Activated B cell treated with CpG ODN at 0.5 μM for 24 hours (primary cell): ENCODE measurements at regions of chr1 and their contacts with region 1.

Region 1: DNA sequence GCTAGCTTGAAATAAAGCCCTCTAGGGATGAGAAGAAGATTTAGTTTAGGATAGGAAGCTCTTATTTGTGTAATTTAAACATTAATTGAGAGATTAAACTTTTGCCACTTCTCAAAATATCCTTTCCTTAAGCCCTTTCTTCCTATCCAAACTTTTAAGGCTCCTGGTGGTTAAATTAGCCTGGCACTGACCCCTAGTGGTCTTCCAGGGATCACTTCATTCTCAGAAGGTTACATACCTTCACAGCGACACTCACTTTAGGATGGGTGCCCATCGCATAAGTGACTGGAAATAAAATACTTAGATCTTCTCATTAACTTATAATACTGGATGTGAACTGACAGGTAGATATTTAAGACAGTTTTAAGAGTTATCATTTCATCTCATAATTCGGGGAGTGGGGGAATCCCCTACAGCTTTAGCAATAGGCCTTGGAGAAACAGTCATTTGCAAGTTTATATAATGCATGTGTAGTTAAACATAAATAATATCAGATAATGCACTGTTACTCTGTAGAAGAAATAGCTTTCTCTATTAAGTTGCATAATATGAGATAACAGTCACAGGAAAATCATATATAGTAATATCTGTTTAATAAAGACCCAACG is 7.4 kb downstream of the LHX9 start:
- DNase-seq: no peak
- ATAC-seq: peak; percentile 76
- H3K4me3 Mint-ChIP-seq: no peak overlapping the region
- H3K27ac Mint-ChIP-seq: no peak overlapping the region
- H3K4me1 Mint-ChIP-seq: peaks cover 19% of the 10 kb centered on the region
- H3K27me3 Mint-ChIP-seq: peaks cover 67% of the 10 kb centered on the region
- CTCF ChIP-seq: no peak

Region 2: GRCh38 chr1:197327776-197328364 is 596.8 kb before region 1 on chr1:
- CTCF ChIA-PET with region 1: no interaction called
- POLR2A ChIA-PET with region 1: no interaction called
- intact Hi-C with region 1: loop called (anchors 5 kb)
- DNase-seq: no peak
- ATAC-seq: no peak
- H3K4me3 Mint-ChIP-seq: no peak overlapping the region
- H3K27ac Mint-ChIP-seq: no peak overlapping the region
- H3K4me1 Mint-ChIP-seq: no peaks in the 10 kb centered on the region
- H3K27me3 Mint-ChIP-seq: no peaks in the 10 kb centered on the region
- CTCF ChIP-seq: no peak

Region 3: DNA sequence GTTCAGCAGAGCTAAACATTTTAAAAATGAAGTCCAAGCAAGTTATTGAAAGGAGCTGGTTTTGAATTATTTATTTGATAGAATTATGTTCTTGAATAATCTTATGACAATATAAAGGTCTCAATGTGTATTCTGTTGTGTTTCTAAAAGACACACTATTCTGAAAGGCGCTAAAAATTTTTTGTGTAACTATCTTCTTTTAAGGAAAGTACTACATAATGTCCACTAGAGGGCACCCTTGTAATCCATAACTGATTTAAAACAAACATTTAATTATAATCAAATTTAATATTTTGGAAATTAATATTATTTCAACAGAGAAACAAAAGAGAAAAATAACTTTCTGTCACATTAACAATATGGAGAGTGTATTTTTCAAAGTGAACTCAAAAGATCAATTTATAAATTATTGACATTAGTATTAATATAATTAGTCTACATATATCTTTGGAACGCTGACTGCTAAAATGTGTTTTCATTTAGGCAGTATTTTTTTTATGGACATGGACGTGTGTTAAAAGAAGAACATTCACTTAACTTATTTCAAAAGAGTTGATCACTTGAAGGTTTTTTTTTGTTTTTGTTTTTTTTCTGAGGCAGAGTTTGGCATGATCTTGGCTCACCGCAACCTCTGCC is 397.8 kb before region 1 on chr1:
- CTCF ChIA-PET with region 1: interaction called, 10 read pairs
- POLR2A ChIA-PET with region 1: no interaction called
- intact Hi-C with region 1: loop called (anchors 1 kb)
- DNase-seq: no peak
- ATAC-seq: no peak
- H3K4me3 Mint-ChIP-seq: no peak overlapping the region
- H3K27ac Mint-ChIP-seq: no peak overlapping the region
- H3K4me1 Mint-ChIP-seq: no peaks in the 10 kb centered on the region
- H3K27me3 Mint-ChIP-seq: no peaks in the 10 kb centered on the region
- CTCF ChIP-seq: peak; percentile 45

Region 4: DNA sequence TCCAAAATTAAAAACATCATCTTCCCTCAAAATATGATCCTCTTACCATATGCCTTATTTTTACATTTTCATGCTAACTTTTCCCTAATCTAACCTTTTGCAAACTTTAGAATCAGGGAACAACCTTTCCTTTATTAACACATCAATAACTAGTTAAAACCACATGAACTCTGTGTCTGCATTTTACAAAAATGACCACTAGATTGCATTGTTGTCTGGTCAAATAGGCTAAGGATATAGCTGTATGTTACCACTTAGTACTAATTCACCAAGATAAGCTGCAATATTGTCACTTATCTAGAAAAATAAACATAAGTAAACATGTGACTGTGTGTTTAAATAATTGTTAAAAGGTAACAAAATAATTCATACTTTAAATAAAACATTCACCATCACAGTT is 231.7 kb before region 1 on chr1:
- CTCF ChIA-PET with region 1: interaction called, 3 read pairs
- POLR2A ChIA-PET with region 1: no interaction called
- intact Hi-C with region 1: loop called (anchors 1 kb)
- DNase-seq: no peak
- ATAC-seq: no peak
- H3K4me3 Mint-ChIP-seq: no peak overlapping the region
- H3K27ac Mint-ChIP-seq: no peak overlapping the region
- H3K4me1 Mint-ChIP-seq: peaks cover 36% of the 10 kb centered on the region
- H3K27me3 Mint-ChIP-seq: no peaks in the 10 kb centered on the region
- CTCF ChIP-seq: no peak

Region 5: DNA sequence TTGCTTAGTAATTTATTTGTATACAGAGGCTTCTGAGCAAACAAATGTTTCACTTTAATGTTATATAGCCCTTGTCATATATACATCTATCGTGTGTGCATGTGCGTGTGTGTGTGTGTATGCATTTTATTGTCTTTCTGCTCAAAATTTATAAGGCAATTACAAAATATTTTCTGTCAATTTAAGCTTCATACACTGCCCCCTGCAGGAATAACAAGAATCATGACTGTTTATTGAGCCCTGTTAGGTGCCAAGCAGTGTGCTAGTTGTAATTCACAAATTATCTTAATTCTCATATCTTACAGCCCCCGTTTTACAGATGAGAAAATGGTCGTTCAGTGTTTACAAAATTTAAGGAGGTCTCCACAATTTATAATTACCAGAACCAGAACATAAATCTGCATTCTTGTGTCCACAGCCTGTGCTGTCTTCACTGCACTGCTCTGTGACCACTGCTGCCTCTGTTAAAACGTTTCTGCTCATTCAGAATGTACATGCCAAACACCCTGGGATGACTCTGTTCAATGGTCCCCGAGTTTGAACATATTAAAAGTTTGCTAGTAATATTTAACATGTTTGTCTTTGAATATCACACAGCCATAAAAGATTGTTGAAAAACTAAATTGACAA is 434.5 kb after region 1 on chr1:
- CTCF ChIA-PET with region 1: no interaction called
- POLR2A ChIA-PET with region 1: no interaction called
- intact Hi-C with region 1: loop called (anchors 10 kb)
- DNase-seq: no peak
- ATAC-seq: no peak
- H3K4me3 Mint-ChIP-seq: no peak overlapping the region
- H3K27ac Mint-ChIP-seq: no peak overlapping the region
- H3K4me1 Mint-ChIP-seq: no peaks in the 10 kb centered on the region
- H3K27me3 Mint-ChIP-seq: peaks cover 11% of the 10 kb centered on the region
- CTCF ChIP-seq: no peak